AG04449 (cell line): ENCODE measurements at regions of chr10 and their contacts with region 1.

Region 1: DNA sequence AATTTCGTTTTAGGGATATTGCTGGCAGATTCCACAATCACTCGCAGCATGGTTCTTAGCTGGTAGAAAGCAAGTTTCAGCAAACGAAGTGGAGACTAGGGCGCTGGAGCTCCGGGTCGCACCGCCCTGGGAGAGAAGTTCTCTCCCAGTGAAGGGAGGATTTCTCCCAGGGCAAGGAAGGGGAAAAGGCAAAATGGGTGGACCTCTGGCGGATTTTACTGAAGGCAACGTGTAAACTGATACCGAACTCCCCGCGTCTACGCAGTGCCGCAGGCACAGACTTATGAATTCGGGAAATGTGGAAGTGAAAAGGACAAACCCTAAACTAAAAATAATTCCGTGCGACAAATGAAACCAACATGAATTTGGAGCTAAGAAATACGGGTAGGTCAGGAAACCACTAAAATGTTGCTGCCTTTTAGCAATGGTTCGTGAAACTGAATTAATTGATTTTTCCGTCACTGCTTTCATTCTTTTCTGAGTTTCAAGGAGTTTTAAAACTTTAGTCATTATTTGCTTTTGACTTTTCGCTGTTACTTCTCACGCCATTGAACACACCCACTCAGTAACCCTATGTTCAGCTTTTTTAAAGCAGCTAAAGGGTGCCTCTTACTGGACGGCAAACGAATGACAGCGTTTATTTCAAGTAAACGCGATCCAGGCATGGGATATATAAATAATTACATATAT is at the start of gene MYOF:
- DNase-seq: peak; percentile 83
- H3K4me3 ChIP-seq: peak within 1 kb of the TSS; percentile 62
- CTCF ChIP-seq: peak; percentile 57

Region 2: DNA sequence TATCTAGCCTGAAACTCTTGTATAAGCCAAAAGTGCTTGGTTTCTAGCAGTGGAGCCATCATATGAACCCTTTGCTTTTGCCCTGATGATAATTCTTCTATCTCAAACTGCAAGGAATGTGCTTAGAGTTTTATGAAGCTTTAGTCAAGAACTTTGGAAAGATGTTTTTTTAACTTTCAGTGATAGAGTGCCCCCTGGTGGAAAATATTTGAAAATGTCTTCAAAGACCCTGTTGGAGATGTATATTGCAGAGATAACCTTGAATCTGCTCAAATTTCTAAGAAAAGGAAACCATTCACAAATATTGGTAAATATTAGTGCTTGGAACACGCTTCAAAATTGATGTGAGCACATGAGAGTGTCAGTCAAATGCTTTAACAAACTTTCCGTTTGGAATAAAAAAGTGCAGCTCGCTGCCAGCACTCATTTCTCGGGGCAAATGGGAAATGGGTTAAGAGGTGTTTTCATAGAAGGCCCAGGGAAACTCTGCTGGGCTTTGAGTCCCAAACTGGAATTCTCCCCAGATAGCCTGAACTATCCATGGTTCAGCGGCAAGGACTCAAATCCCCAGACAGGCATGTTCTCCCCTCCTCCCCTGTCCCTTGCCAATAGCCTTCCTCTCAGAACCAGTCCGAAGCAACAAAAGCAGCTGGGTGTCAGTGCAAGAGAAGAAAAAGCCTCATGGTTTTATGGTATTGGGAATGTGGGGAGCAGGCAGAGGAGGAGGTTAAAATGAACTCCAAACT is 129.5 kb before region 1 on chr10:
- CTCF ChIA-PET with region 1: interaction called, 54 read pairs
- POLR2A ChIA-PET with region 1: interaction called, 3 read pairs
- DNase-seq: no peak
- H3K4me3 ChIP-seq: no peak overlapping the region
- CTCF ChIP-seq: peak; percentile 17

Region 3: DNA sequence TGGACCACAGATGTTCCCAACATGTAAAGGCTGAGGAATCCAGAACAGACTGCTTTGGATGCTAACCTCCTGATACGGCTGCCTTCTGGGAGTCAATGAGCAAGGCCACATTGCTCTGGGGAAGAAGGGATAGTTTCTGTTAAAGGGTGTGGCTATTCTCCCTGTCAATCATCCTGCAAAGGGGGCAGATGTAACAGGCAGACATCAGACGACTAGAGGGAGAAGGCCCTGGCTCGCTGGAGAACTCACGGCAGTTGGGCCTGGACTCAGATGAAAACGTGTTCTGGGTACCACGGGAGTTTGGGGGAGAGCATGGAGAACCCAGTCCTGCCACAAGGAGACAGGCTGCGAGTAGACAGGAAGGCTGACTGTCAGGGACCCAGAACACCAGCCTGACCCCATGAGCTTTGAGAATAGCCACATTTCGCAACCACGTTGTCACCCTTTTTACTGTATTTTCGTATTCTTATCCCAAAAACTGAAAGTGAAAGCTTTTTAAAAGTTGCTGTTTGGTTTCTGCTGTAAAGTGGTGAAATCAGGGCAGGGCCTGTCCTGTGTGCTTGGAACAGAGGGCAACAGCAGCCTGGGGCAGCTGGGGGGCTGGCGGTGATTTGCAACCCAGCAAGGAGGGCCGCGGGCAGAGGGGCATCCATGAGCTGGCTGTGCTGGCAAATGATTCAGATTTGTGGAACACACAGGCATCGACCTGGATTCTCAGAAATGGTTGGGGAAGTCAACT is 95.5 kb before region 1 on chr10:
- CTCF ChIA-PET with region 1: interaction called, 434 read pairs
- POLR2A ChIA-PET with region 1: interaction called, 17 read pairs
- DNase-seq: no peak
- H3K4me3 ChIP-seq: no peak overlapping the region
- CTCF ChIP-seq: no peak

Region 4: DNA sequence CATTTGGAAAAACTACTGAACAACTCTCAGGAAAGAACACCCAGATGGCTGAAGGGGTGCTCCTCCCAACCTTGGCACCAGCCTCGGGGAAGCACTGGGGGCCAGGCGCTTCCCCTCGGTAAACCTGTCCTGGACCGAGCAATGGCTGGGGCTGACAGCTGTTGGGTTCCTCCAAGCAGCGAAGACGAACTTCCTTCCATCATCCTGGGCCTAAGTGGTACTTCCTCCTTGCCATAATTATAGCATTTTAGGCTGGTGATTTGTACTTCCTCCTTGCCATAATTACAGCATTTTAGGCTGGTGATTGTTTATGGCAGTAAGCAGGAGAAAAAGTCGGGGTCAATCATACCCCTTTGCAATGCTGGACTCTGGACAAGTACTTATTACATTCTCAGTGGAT is 69.5 kb before region 1 on chr10:
- CTCF ChIA-PET with region 1: interaction called, 23 read pairs
- POLR2A ChIA-PET with region 1: interaction called, 3 read pairs
- DNase-seq: no peak
- H3K4me3 ChIP-seq: no peak overlapping the region
- CTCF ChIP-seq: no peak

Region 5: GRCh38 chr10:93437088-93437945 is 45.0 kb before region 1 on chr10:
- CTCF ChIA-PET with region 1: interaction called, 30 read pairs
- POLR2A ChIA-PET with region 1: interaction called, 19 read pairs
- DNase-seq: peak; percentile 98
- H3K4me3 ChIP-seq: no peak overlapping the region; the same call in none of the 2 replicates
- CTCF ChIP-seq: no peak

Region 6: GRCh38 chr10:93495654-93496321 is 13.5 kb after region 1 on chr10:
- CTCF ChIA-PET with region 1: interaction called, 17 read pairs
- POLR2A ChIA-PET with region 1: interaction called, 9 read pairs
- DNase-seq: no peak
- H3K4me3 ChIP-seq: peak overlapping the region; percentile 76
- CTCF ChIP-seq: no peak